ENCODE measurements at regions of chr14 and their contacts with region 1.

Region 1: GRCh38 chr14:70317969-70318634 is 41.4 kb downstream of the COX16 start:
- DNase-seq: peak; percentile 97
- ATAC-seq: peak; percentile 97
- H3K4me3 ChIP-seq: no peak overlapping the region; a peak in 1 of 6 replicates
- H3K27ac ChIP-seq: peak overlapping the region; percentile 69
- H3K4me1 ChIP-seq: peaks cover 35% of the 10 kb centered on the region
- H3K27me3 ChIP-seq: no peaks in the 10 kb centered on the region
- CTCF ChIP-seq: peak; percentile 88
- EP300 ChIP-seq: peak; percentile 80 to 93
- POLR2A ChIP-seq: no peak
- RAD21 ChIP-seq: peak; percentile 83

Region 2: DNA sequence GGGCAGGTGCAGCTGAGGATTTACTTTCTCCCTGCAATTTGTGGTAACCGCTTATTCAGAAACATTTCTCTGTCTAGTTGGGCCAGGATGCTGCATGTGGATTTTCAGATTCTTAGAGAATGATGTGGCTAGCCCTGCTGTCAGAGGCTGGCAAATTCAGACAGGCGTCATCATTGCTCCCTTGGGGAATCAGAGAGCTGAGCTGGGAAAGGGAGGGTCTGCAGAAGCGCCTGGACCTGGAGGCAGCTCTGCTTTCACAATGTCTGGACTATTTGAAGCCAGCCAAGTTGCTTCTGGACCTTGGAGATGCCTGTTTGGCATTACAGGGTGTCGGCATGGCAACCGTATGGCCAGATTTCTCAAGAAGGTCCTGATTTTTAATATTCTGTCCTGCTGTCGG is 1054.7 kb before region 1 on chr14:
- CTCF ChIA-PET with region 1: no interaction called
- POLR2A ChIA-PET with region 1: no interaction called
- in situ Hi-C with region 1: no loop called
- intact Hi-C with region 1: no loop called
- DNase-seq: no peak
- ATAC-seq: no peak
- H3K4me3 ChIP-seq: no peak overlapping the region
- H3K27ac ChIP-seq: no peak overlapping the region
- H3K4me1 ChIP-seq: peaks cover 20% of the 10 kb centered on the region
- H3K27me3 ChIP-seq: peaks cover 2 to 33% of the 10 kb centered on the region in 2 experiments; a peak in 3 of 5 replicates
- CTCF ChIP-seq: no peak
- EP300 ChIP-seq: no peak
- POLR2A ChIP-seq: no peak
- RAD21 ChIP-seq: no peak

Region 3: GRCh38 chr14:69726761-69727511 is 591.2 kb before region 1 on chr14:
- CTCF ChIA-PET with region 1: no interaction called
- POLR2A ChIA-PET with region 1: no interaction called
- in situ Hi-C with region 1: loop called (anchors 10 kb)
- intact Hi-C with region 1: loop called (anchors 5 kb)
- DNase-seq: peak; percentile 39
- ATAC-seq: peak; percentile 92
- H3K4me3 ChIP-seq: peak overlapping the region; percentile 16 to 70 (median 44); a peak in 5 of 6 replicates
- H3K27ac ChIP-seq: no peak overlapping the region
- H3K4me1 ChIP-seq: peaks cover 35% of the 10 kb centered on the region
- H3K27me3 ChIP-seq: peaks cover 0 to 4% of the 10 kb centered on the region in 2 experiments; a peak in 4 of 5 replicates
- CTCF ChIP-seq: peak; percentile 98
- EP300 ChIP-seq: no peak
- POLR2A ChIP-seq: no peak
- RAD21 ChIP-seq: peak; percentile 97

Region 4: DNA sequence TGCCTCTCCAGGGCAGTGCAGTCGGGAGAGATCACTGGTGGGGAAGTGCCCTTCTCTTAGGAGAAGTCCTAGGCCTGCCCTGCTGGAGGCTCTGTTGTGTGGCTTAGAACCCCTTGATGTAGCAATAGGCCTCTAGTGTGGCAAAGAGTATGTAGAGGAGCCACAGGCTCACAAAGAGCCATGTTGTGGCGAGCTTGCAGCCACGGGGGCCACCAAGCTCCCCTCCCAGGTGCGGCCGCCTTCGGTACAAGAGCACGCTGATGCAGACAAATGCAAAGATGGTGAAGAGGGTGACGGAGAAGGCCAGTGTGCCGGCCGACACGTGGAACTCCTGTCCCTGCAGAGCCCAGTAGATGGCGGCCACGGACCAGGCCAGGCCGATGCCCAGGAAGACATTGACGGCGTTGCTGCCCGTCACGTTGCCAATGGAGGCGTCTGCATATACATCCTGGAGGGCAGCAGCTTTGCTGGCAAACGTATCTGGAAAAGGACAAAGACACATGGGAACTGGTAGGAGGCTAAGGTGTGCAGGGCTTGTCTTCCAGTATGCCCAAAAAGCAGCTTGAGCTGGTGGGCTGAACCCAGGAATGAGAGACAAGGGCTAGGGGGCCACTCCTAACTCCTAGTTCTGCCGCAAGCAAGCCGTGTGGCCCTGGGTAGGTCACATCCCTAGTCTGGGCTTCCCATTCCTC is 272.1 kb before region 1 on chr14:
- CTCF ChIA-PET with region 1: interaction called, 8 read pairs
- POLR2A ChIA-PET with region 1: no interaction called
- in situ Hi-C with region 1: loop called (anchors 5 kb)
- intact Hi-C with region 1: loop called (anchors 1 kb)
- DNase-seq: peak; percentile 73
- ATAC-seq: peak; percentile 91
- H3K4me3 ChIP-seq: peak overlapping the region in 2 of 3 experiments; percentile 15 to 61; a peak in 3 of 6 replicates
- H3K27ac ChIP-seq: peak overlapping the region; percentile 71
- H3K4me1 ChIP-seq: peaks cover 61% of the 10 kb centered on the region
- H3K27me3 ChIP-seq: no peaks in the 10 kb centered on the region
- CTCF ChIP-seq: peak; percentile 100
- EP300 ChIP-seq: no peak
- POLR2A ChIP-seq: no peak
- RAD21 ChIP-seq: peak; percentile 98

Region 5: DNA sequence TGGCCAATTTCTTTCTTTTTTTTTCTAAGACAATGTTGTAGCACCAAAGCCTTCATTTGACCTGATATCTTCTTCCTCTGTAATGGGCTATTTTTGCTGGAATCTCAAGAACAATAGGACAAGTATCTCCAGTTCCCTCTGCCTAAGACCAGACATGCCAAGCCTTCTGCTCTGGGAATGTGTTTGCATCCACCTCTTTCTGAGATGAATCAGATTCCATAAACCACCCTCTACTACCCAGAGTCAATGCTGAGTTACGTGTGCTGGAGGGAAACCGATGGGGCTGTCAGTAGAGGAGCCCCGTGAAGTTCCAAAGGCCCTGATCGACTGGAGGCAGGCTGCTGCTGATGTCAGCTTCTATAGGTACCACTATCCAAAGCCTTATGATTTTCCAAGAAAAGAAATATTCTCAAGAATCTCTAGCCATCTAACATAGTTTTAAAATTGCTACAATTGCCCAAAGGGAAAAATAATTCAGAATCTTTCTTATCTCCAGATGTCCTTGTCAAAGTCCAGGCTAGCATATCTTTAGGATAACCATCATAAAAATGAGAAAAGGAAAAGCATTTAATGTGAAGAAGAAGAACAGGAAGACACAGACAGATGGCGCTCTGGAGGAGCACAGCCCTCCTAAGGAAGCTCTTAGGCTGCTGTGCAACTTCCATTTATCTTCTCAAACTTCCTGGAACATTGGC is 231.3 kb before region 1 on chr14:
- CTCF ChIA-PET with region 1: interaction called, 26 read pairs
- POLR2A ChIA-PET with region 1: no interaction called
- in situ Hi-C with region 1: loop called (anchors 5 kb)
- intact Hi-C with region 1: loop called (anchors 1 kb)
- DNase-seq: peak; percentile 14
- ATAC-seq: peak; percentile 34; the same call in 1 of the 3 replicates
- H3K4me3 ChIP-seq: no peak overlapping the region
- H3K27ac ChIP-seq: no peak overlapping the region
- H3K4me1 ChIP-seq: no peaks in the 10 kb centered on the region
- H3K27me3 ChIP-seq: peaks cover 0 to 1% of the 10 kb centered on the region in 2 experiments; a peak in 3 of 5 replicates
- CTCF ChIP-seq: peak; percentile 64
- EP300 ChIP-seq: no peak
- POLR2A ChIP-seq: no peak
- RAD21 ChIP-seq: 0 out of 2 replicates have a peak, but pooled peaks have one; percentile 10

Region 6: GRCh38 chr14:70448633-70449340 is 130.7 kb after region 1 on chr14:
- CTCF ChIA-PET with region 1: no interaction called
- POLR2A ChIA-PET with region 1: no interaction called
- in situ Hi-C with region 1: no loop called
- intact Hi-C with region 1: loop called (anchors 1 kb)
- DNase-seq: peak; percentile 88
- ATAC-seq: peak; percentile 98
- H3K4me3 ChIP-seq: no peak overlapping the region
- H3K27ac ChIP-seq: peak overlapping the region; percentile 45
- H3K4me1 ChIP-seq: peaks cover 17% of the 10 kb centered on the region
- H3K27me3 ChIP-seq: no peaks in the 10 kb centered on the region
- CTCF ChIP-seq: no peak
- EP300 ChIP-seq: peak; percentile 59 to 82; a peak in 3 of 4 replicates
- POLR2A ChIP-seq: no peak
- RAD21 ChIP-seq: no peak

Region 7: GRCh38 chr14:70611216-70611615 is 293.1 kb after region 1 on chr14:
- CTCF ChIA-PET with region 1: no interaction called
- POLR2A ChIA-PET with region 1: no interaction called
- in situ Hi-C with region 1: no loop called
- intact Hi-C with region 1: no loop called
- DNase-seq: no peak
- ATAC-seq: no peak
- H3K4me3 ChIP-seq: no peak overlapping the region
- H3K27ac ChIP-seq: no peak overlapping the region
- H3K4me1 ChIP-seq: no peaks in the 10 kb centered on the region
- H3K27me3 ChIP-seq: no peaks in the 10 kb centered on the region
- CTCF ChIP-seq: no peak
- EP300 ChIP-seq: no peak
- POLR2A ChIP-seq: no peak
- RAD21 ChIP-seq: no peak

Measured in HepG2 (cell line).